Activated B cell treated with CpG ODN at 0.5 μM for 24 hours (primary cell): ENCODE measurements at regions of chr6 and their contacts with region 1.

Region 1: GRCh38 chr6:78961513-78961912 is 94.2 kb downstream of the IRAK1BP1 start:
- DNase-seq: no peak
- ATAC-seq: no peak
- H3K4me3 Mint-ChIP-seq: no peak overlapping the region
- H3K27ac Mint-ChIP-seq: no peak overlapping the region
- H3K4me1 Mint-ChIP-seq: no peaks in the 10 kb centered on the region
- H3K27me3 Mint-ChIP-seq: no peaks in the 10 kb centered on the region
- CTCF ChIP-seq: no peak

Region 2: DNA sequence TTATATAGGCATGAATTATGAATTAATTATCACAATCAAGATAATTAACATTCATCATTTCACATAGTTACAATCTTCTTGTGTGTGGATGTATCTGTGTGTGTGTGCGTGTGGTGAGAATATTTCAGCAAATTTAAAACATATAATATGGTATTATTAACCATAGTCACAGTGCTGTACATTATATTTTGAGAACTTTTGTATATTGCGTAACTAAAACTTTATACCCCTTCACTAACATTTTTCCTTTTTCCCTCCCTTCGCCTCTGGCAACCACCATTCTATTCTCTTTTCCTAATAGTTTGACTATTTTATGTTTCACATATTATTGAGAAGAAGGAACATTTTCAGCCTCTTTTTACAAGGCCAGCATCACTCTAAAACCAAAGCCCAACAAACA is 1675.0 kb before region 1 on chr6:
- CTCF ChIA-PET with region 1: no interaction called
- POLR2A ChIA-PET with region 1: no interaction called
- intact Hi-C with region 1: no loop called
- DNase-seq: no peak
- ATAC-seq: no peak
- H3K4me3 Mint-ChIP-seq: no peak overlapping the region
- H3K27ac Mint-ChIP-seq: no peak overlapping the region
- H3K4me1 Mint-ChIP-seq: no peaks in the 10 kb centered on the region
- H3K27me3 Mint-ChIP-seq: no peaks in the 10 kb centered on the region
- CTCF ChIP-seq: no peak

Region 3: GRCh38 chr6:78526438-78526837 is 435.1 kb before region 1 on chr6:
- CTCF ChIA-PET with region 1: no interaction called
- POLR2A ChIA-PET with region 1: no interaction called
- intact Hi-C with region 1: no loop called
- DNase-seq: no peak
- ATAC-seq: no peak
- H3K4me3 Mint-ChIP-seq: no peak overlapping the region
- H3K27ac Mint-ChIP-seq: no peak overlapping the region
- H3K4me1 Mint-ChIP-seq: no peaks in the 10 kb centered on the region
- H3K27me3 Mint-ChIP-seq: no peaks in the 10 kb centered on the region
- CTCF ChIP-seq: no peak

Region 4: DNA sequence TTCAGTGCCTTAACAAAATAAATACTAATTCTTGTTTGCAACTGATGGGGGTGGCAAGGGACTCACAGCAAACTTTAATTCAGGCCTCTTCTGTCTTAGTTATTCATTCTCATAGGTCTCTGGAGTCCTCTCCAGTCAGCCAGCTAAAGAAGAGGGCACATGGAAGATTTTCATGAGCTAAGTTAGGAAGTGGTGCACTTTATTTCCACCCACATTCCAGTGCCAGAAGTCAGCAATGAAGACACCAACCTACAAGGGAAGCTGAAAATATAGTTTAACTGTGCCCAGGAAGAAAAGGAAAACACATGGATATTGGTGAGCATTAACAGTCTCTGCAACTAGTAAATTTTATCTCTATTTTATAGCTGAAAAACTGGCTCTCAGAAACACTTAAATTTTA is 110.9 kb before region 1 on chr6:
- CTCF ChIA-PET with region 1: no interaction called
- POLR2A ChIA-PET with region 1: no interaction called
- intact Hi-C with region 1: no loop called
- DNase-seq: no peak
- ATAC-seq: no peak
- H3K4me3 Mint-ChIP-seq: no peak overlapping the region
- H3K27ac Mint-ChIP-seq: no peak overlapping the region
- H3K4me1 Mint-ChIP-seq: no peaks in the 10 kb centered on the region
- H3K27me3 Mint-ChIP-seq: no peaks in the 10 kb centered on the region
- CTCF ChIP-seq: no peak

Region 5: GRCh38 chr6:78908621-78909020 is 52.9 kb before region 1 on chr6:
- CTCF ChIA-PET with region 1: no interaction called
- POLR2A ChIA-PET with region 1: no interaction called
- intact Hi-C with region 1: no loop called
- DNase-seq: no peak
- ATAC-seq: no peak
- H3K4me3 Mint-ChIP-seq: no peak overlapping the region
- H3K27ac Mint-ChIP-seq: no peak overlapping the region
- H3K4me1 Mint-ChIP-seq: peaks cover 16% of the 10 kb centered on the region
- H3K27me3 Mint-ChIP-seq: peaks cover 24% of the 10 kb centered on the region
- CTCF ChIP-seq: no peak

Region 6: GRCh38 chr6:78947962-78948361 is 13.6 kb before region 1 on chr6:
- CTCF ChIA-PET with region 1: no interaction called
- POLR2A ChIA-PET with region 1: no interaction called
- intact Hi-C with region 1: loop called (anchors 2 kb)
- DNase-seq: no peak
- ATAC-seq: no peak
- H3K4me3 Mint-ChIP-seq: no peak overlapping the region
- H3K27ac Mint-ChIP-seq: no peak overlapping the region
- H3K4me1 Mint-ChIP-seq: no peaks in the 10 kb centered on the region
- H3K27me3 Mint-ChIP-seq: no peaks in the 10 kb centered on the region
- CTCF ChIP-seq: no peak

Region 7: DNA sequence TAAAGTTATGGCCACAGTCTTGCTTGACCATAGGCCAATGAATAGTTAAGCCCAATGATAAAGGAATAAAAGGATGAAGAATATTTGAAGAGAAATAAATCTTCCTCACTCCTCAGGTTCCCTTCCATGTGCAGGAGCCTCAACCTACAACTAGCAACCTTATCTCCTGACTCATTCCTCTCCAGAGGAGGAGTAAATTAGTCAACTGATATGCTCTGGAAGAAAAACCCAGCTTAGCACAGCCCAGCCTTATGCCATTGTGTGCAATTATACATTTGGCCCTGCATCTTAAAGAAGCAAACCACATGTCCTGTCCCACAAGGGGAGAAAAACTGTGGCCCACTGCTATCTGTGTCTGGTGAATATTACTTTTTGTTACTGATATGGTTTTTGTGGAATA is 34.4 kb after region 1 on chr6:
- CTCF ChIA-PET with region 1: no interaction called
- POLR2A ChIA-PET with region 1: no interaction called
- intact Hi-C with region 1: loop called (anchors 5 kb)
- DNase-seq: no peak
- ATAC-seq: no peak
- H3K4me3 Mint-ChIP-seq: no peak overlapping the region
- H3K27ac Mint-ChIP-seq: no peak overlapping the region
- H3K4me1 Mint-ChIP-seq: no peaks in the 10 kb centered on the region
- H3K27me3 Mint-ChIP-seq: no peaks in the 10 kb centered on the region
- CTCF ChIP-seq: no peak